Transverse colon (tissue), 4 donors: ENCODE measurements at regions of chr10 and their contacts with region 1.

Region 1: GRCh38 chr10:113108212-113108835 is 158.3 kb downstream of the TCF7L2 start:
- DNase-seq: no peak
- H3K4me3 ChIP-seq: no peak overlapping the region
- H3K27ac ChIP-seq: no peak overlapping the region
- H3K4me1 ChIP-seq: peaks cover 23 to 44% (median 36%) of the 10 kb centered on the region in 4 donors
- H3K27me3 ChIP-seq: no peaks in the 10 kb centered on the region
- CTCF ChIP-seq: peak in 4 of 5 experiments; percentile 36 to 49 (median 44)
- EP300 ChIP-seq: no peak
- POLR2A ChIP-seq: no peak

Region 2: DNA sequence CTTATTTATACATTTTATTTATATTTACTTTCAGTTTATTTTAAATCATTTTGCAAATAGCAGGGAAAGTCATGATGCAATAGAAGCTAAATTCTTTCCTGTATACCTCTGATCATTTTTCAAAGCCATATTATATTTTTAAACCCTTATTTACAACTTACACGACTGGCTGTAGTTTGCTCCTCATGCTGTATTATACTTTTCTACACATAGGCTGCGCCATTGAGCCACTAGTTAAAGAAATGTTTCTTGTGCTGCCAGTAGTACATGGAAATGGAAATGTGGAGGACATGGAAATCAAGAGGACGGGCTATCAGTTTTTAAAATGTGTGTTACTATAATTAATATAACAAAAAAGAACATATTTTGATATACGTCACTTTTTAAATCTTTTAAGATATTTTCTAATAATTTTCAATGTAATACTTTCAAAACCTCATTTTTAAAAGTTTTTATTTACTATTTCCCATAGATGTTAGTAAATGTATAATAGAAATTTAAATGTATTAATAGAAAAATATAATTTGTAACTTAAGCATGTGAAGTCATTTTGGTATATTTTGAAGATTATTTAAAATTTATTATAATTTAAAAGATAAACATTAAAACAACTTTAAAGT is 542.8 kb before region 1 on chr10:
- in situ Hi-C with region 1: loop called in 3 of 4 experiments (anchors 25 kb)
- intact Hi-C with region 1: no loop called
- DNase-seq: peak; percentile 32
- H3K4me3 ChIP-seq: no peak overlapping the region
- H3K27ac ChIP-seq: no peak overlapping the region
- H3K4me1 ChIP-seq: peaks cover 0 to 13% (median 2%) of the 10 kb centered on the region in 4 donors
- H3K27me3 ChIP-seq: no peaks in the 10 kb centered on the region
- CTCF ChIP-seq: peak; percentile 55 to 85 (median 68)
- EP300 ChIP-seq: no peak
- POLR2A ChIP-seq: no peak

Region 3: GRCh38 chr10:112732277-112732921 is 375.9 kb before region 1 on chr10:
- in situ Hi-C with region 1: loop called in 1 of 4 experiments (anchors 25 kb)
- intact Hi-C with region 1: no loop called
- DNase-seq: no peak
- H3K4me3 ChIP-seq: no peak overlapping the region
- H3K27ac ChIP-seq: no peak overlapping the region
- H3K4me1 ChIP-seq: peaks cover 0 to 20% (median 13%) of the 10 kb centered on the region in 4 donors
- H3K27me3 ChIP-seq: no peaks in the 10 kb centered on the region
- CTCF ChIP-seq: no peak
- EP300 ChIP-seq: no peak
- POLR2A ChIP-seq: no peak

Region 4: DNA sequence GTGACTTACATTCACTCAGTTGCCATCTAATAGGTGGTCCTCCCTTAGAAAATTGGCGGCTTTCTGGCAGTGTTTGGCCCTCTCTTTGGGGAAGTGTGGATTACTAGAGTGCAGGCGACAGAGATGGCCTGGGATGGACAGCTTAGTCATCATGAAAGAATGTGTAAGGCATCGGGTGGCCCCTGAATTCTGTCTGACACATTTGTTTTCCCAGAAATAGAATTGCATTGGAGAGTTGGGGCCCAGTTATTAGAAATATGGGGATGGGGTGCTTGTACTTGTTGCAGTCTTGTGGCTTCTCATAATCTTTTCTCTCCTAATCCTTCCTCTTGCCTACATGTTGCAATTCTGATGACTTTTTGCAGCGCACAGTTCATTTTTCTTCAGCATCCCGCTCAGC is 144.5 kb before region 1 on chr10:
- in situ Hi-C with region 1: no loop called
- intact Hi-C with region 1: no loop called
- DNase-seq: no peak
- H3K4me3 ChIP-seq: no peak overlapping the region
- H3K27ac ChIP-seq: peak overlapping the region in 1 of 4 donors; percentile 57
- H3K4me1 ChIP-seq: peaks cover 10 to 59% (median 28%) of the 10 kb centered on the region in 4 donors
- H3K27me3 ChIP-seq: no peaks in the 10 kb centered on the region
- CTCF ChIP-seq: no peak
- EP300 ChIP-seq: no peak
- POLR2A ChIP-seq: no peak